ENCODE measurements at regions of chr9 and their contacts with region 1.

Region 1: DNA sequence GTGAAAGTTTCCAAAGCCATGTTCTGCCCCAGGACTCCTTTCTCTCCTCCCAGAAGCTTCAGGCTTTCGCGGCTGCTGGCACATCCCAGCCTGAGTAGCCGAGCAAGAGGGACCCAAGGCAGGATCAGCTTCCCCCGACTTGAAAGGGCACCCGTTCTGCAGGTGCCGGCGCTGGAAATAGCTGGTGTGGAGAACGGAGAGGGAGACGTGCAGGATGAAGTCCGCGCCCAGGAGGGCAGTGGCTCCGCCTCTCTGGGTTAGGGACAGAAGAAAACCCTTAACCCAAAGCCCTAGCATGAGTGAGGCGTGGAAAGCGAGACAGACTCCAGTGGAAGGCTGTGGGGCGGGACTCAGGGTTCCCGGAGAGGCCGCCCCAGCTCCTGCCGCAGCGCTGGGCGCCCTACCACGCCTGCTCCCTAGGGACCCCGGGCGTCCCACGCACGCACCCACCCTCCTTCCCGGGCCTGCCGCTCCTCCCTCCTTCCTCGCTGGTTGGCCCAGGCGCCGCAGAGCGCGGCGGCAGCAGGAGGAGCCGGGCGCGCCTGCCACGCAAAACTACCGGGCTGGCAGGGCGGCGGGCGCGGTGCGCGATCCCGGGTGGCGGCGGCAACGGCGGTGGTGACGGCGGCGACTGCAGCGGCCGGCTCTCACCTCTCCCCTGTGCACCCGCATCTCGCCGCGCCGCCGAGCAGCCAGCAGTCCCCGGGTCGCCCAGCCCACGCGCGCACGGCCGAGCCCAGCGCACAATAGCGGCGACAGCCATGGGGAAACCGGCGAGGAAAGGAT is at the start of gene SLC1A1:
- DNase-seq: no peak
- H3K4me3 Mint-ChIP-seq: peak within 1 kb of the TSS; percentile 74
- H3K27ac Mint-ChIP-seq: no peak within 1 kb of the TSS
- H3K4me1 Mint-ChIP-seq: peaks cover 11% of the 10 kb centered on the region
- H3K27me3 Mint-ChIP-seq: peaks cover 63% of the 10 kb centered on the region
- total RNA-seq, gene SLC1A1: 0.14 TPM in 1 of 2 replicates, not detected in the other

Region 2: GRCh38 chr9:4297151-4297785 is 192.8 kb before region 1 on chr9:
- intact Hi-C with region 1: loop called (anchors 10 kb)
- DNase-seq: peak; percentile 22
- H3K4me3 Mint-ChIP-seq: peak overlapping the region; percentile 97
- H3K27ac Mint-ChIP-seq: peak overlapping the region; percentile 87
- H3K4me1 Mint-ChIP-seq: peaks cover 49% of the 10 kb centered on the region
- H3K27me3 Mint-ChIP-seq: peaks cover 56% of the 10 kb centered on the region

Measured in activated T-helper 2 cell treated with anti-CD3 and anti-CD28 coated beads, Interferon-gamma antibody, Interleukin-2, Interleukin-4, amounts not matched to agents 10 μg/mL and 5 μg/mL and 100 μg/mL, durations not matched to agents 14 hours and 24 hours and 36 hours (primary cell).